ENCODE measurements at regions of chr3 and their contacts with region 1.

Region 1: GRCh38 chr3:161230621-161231171 is 9.6 kb downstream of the NMD3 start:
- DNase-seq: no peak
- ATAC-seq: no peak
- H3K4me3 Mint-ChIP-seq: no peak overlapping the region
- H3K27ac Mint-ChIP-seq: no peak overlapping the region
- H3K4me1 Mint-ChIP-seq: peaks cover 6% of the 10 kb centered on the region
- H3K27me3 Mint-ChIP-seq: no peaks in the 10 kb centered on the region

Region 2: GRCh38 chr3:160531311-160531710 is 699.4 kb before region 1 on chr3:
- CTCF ChIA-PET with region 1: no interaction called
- POLR2A ChIA-PET with region 1: no interaction called
- intact Hi-C with region 1: loop called in 1 of 2 experiments (anchors 10 kb)
- DNase-seq: no peak
- ATAC-seq: no peak
- H3K4me3 Mint-ChIP-seq: no peak overlapping the region
- H3K27ac Mint-ChIP-seq: no peak overlapping the region
- H3K4me1 Mint-ChIP-seq: no peaks in the 10 kb centered on the region
- H3K27me3 Mint-ChIP-seq: no peaks in the 10 kb centered on the region

Measured in activated CD4-positive, alpha-beta T cell treated with anti-CD3 and anti-CD28 coated beads for 36 hours (primary cell).